A549 (cell line): ENCODE measurements at regions of chr2 and their contacts with region 1.

Region 1: DNA sequence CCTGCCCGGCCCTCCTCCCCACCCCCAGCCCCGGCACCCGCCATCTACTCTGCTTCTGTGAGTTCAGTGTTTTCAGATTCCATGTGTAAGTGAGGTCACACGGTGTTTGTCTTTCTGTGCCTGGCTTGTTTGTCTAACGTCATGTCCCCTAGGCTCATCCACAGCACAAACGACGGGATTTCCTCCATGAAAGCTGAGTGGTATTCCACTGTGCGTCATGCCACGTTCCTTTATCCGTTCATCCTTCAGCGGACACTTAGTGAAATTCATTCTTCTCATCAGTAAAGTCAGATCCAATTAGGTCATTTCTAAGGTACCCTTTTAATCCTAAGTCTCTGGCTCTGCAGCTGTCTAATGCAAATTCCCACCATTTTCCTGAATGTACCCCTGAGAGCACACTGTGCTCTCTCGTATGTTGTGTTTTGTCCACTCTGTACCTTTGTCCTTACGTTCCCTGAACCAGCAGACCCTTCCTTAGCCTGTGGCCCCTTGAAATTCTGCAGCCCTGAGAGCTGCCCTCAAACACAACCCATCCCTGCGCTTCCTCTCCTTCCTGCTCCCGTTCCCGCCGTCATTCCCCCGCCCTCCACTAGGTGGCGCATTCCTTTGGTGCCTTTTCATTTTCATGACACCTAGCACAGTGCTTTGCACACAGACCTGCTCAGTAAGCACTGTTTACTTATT is 44.1 kb downstream of the TRAPPC12 start:
- DNase-seq: peak; percentile 63 to 70
- ATAC-seq: peak; percentile 69 to 91
- H3K4me3 ChIP-seq: no peak overlapping the region
- H3K27ac ChIP-seq: no peak overlapping the region
- H3K4me1 ChIP-seq: no peaks in the 10 kb centered on the region
- CTCF ChIP-seq: peak; percentile 93
- EP300 ChIP-seq: no peak
- POLR2A ChIP-seq: no peak
- RAD21 ChIP-seq: peak; percentile 41 to 51; a peak in 4 of 5 replicates

Region 2: GRCh38 chr2:3379647-3380534 is 43.7 kb before region 1 on chr2 and contains the start of gene TRAPPC12:
- CTCF ChIA-PET with region 1: interaction called, 11 read pairs
- POLR2A ChIA-PET with region 1: interaction called, 4 read pairs
- DNase-seq: peak; percentile 90 to 96
- ATAC-seq: peak; percentile 81 to 88
- H3K4me3 ChIP-seq: peak within 1 kb of the TSS; percentile 81
- H3K27ac ChIP-seq: peak within 1 kb of the TSS; percentile 88 to 96
- H3K4me1 ChIP-seq: peaks cover 23% of the 10 kb centered on the region
- CTCF ChIP-seq: peak; percentile 49
- EP300 ChIP-seq: no peak
- POLR2A ChIP-seq: peak; percentile 88
- RAD21 ChIP-seq: 0 out of 5 replicates have a peak, but pooled peaks of 1 of the 2 experiments have one; percentile 16
- polyA plus RNA-seq, gene TRAPPC12: 55.0 and 71.8 TPM in 2 replicates

Region 3: DNA sequence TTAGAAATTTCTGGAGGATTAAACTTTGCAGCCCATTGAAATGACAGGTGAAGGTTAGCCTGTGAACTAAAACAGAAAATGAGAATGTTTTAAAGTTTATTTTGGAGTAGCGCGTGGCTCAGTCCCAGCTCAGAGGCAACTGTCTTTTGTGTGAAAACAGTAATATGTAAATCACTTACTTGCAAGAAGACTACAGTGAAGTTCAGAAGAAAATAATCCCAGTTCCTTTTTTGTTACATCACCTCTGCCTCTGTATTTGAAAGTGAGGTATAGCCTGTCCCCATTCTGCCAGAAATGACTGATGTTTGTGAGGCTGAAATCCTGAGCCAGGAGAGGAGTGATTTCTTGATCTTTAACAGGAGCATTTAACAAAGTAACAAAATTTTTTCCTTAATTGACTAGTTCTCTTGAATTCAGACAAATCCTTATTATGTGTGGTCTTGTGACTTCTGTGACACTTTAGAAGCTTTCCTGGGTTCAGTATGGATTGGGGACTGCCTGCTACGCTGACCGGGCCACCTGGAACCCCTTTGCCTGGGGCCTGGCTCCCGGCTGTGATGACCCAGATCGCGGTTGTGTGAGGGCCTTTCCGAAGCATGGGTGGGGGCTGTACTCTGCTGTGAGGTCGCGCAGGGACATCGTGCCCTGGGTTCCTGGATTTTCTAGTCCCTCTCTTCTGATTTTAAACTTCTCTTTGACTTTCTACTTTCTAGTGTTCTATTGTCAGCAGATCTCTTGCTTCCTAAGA is 19.9 kb before region 1 on chr2:
- CTCF ChIA-PET with region 1: interaction called, 25 read pairs
- POLR2A ChIA-PET with region 1: no interaction called
- DNase-seq: no peak
- ATAC-seq: no peak
- H3K4me3 ChIP-seq: no peak overlapping the region
- H3K27ac ChIP-seq: no peak overlapping the region
- H3K4me1 ChIP-seq: no peaks in the 10 kb centered on the region
- CTCF ChIP-seq: no peak
- EP300 ChIP-seq: no peak
- POLR2A ChIP-seq: no peak
- RAD21 ChIP-seq: no peak

Region 4: GRCh38 chr2:3443506-3444073 is 20.0 kb after region 1 on chr2:
- CTCF ChIA-PET with region 1: interaction called, 38 read pairs
- POLR2A ChIA-PET with region 1: no interaction called
- DNase-seq: peak in 1 of 2 experiments; percentile 48
- ATAC-seq: peak; percentile 66 to 82; a peak in 3 of 6 replicates
- H3K4me3 ChIP-seq: no peak overlapping the region
- H3K27ac ChIP-seq: no peak overlapping the region
- H3K4me1 ChIP-seq: no peaks in the 10 kb centered on the region
- CTCF ChIP-seq: no peak
- EP300 ChIP-seq: no peak
- POLR2A ChIP-seq: no peak
- RAD21 ChIP-seq: peak in 1 of 2 experiments; percentile 10; a peak in 1 of 5 replicates